Activated CD8-positive, alpha-beta T cell treated with anti-CD3 and anti-CD28 coated beads, Interleukin-2, amount 10 ng/mL, durations not matched to agents 7 days and 5 days (primary cell): ENCODE measurements at regions of chr5 and their contacts with region 1.

Region 1: DNA sequence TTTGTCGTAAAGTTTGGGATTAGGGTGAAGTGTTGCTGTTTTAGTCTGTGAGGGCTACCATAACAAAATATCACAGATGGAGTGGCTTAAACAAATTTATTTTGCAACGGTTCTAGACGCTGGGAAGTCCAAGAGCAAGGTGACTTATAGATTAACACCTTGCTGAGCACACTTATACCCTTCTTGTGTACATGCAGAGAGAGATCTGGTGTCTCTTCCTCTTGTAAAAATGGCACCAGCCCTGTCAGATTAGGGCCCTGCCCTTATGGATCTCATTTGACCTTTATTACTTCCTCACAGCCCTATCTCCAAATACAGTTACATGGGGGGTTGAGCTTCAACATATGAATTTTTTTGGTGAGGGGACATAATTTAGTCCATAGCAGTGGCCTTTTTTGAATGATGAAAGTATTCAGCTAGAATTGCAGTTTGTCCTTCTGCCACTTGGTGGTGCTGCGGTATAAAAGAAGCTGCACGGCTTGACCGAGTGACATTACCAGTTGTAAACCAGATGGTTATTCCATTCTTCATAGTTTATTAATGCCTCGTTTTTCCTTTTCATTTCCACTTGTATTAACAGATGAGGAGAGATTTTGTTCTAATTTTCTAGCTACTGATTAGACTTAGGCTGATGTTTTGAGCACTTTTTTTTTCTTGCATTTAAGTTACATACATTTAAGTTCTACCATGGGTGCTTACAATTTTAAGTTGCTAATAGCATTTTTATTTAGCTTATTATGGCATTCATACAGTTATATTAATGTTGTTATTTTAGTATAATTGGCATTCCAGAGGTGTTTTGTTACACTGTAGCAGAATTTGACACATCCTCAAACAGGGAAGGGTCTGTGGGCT is 19.4 kb downstream of the DCP2 start:
- DNase-seq: peak; percentile 82
- ATAC-seq: peak; percentile 82
- H3K4me3 Mint-ChIP-seq: no peak overlapping the region
- H3K27ac Mint-ChIP-seq: no peak overlapping the region
- H3K4me1 Mint-ChIP-seq: peaks cover 19% of the 10 kb centered on the region
- H3K27me3 Mint-ChIP-seq: no peaks in the 10 kb centered on the region

Region 2: GRCh38 chr5:112976432-112977309 is 19.3 kb before region 1 on chr5 and contains the start of gene DCP2:
- CTCF ChIA-PET with region 1: interaction called, 35 read pairs
- POLR2A ChIA-PET with region 1: interaction called, 5 read pairs
- DNase-seq: peak; percentile 98
- ATAC-seq: peak; percentile 98
- H3K4me3 Mint-ChIP-seq: peak within 1 kb of the TSS; percentile 97
- H3K27ac Mint-ChIP-seq: peak within 1 kb of the TSS; percentile 96
- H3K4me1 Mint-ChIP-seq: peaks cover 36% of the 10 kb centered on the region
- H3K27me3 Mint-ChIP-seq: no peaks in the 10 kb centered on the region
- total RNA-seq, gene DCP2: 119 to 128 TPM

Region 3: GRCh38 chr5:113034182-113034773 is 38.3 kb after region 1 on chr5:
- CTCF ChIA-PET with region 1: interaction called, 16 read pairs
- POLR2A ChIA-PET with region 1: no interaction called
- DNase-seq: peak; percentile 17
- ATAC-seq: no peak
- H3K4me3 Mint-ChIP-seq: no peak overlapping the region
- H3K27ac Mint-ChIP-seq: no peak overlapping the region
- H3K4me1 Mint-ChIP-seq: peaks cover 7% of the 10 kb centered on the region
- H3K27me3 Mint-ChIP-seq: no peaks in the 10 kb centered on the region

Region 4: GRCh38 chr5:113075019-113075418 is 79.0 kb after region 1 on chr5:
- CTCF ChIA-PET with region 1: interaction called, 24 read pairs
- POLR2A ChIA-PET with region 1: no interaction called
- DNase-seq: no peak
- ATAC-seq: no peak
- H3K4me3 Mint-ChIP-seq: no peak overlapping the region
- H3K27ac Mint-ChIP-seq: no peak overlapping the region
- H3K4me1 Mint-ChIP-seq: peaks cover 21% of the 10 kb centered on the region
- H3K27me3 Mint-ChIP-seq: no peaks in the 10 kb centered on the region

Region 5: GRCh38 chr5:113319256-113320053 is 323.5 kb after region 1 on chr5:
- CTCF ChIA-PET with region 1: interaction called, 12 read pairs
- POLR2A ChIA-PET with region 1: no interaction called
- DNase-seq: no peak
- ATAC-seq: no peak
- H3K4me3 Mint-ChIP-seq: no peak overlapping the region
- H3K27ac Mint-ChIP-seq: no peak overlapping the region
- H3K4me1 Mint-ChIP-seq: no peaks in the 10 kb centered on the region
- H3K27me3 Mint-ChIP-seq: peaks cover 4% of the 10 kb centered on the region

Region 6: GRCh38 chr5:113606298-113607134 is 610.5 kb after region 1 on chr5:
- CTCF ChIA-PET with region 1: interaction called, 22 read pairs
- POLR2A ChIA-PET with region 1: no interaction called
- DNase-seq: peak; percentile 68
- ATAC-seq: peak; percentile 87
- H3K4me3 Mint-ChIP-seq: no peak overlapping the region
- H3K27ac Mint-ChIP-seq: no peak overlapping the region
- H3K4me1 Mint-ChIP-seq: peaks cover 15% of the 10 kb centered on the region
- H3K27me3 Mint-ChIP-seq: peaks cover 26% of the 10 kb centered on the region